ENCODE measurements at regions of chr1 and their contacts with region 1.

Region 1: GRCh38 chr1:76154206-76154956 is 79.8 kb downstream of the ST6GALNAC3 start:
- DNase-seq: peak; percentile 67 to 82 (median 69)
- ATAC-seq: peak; percentile 82 to 93 (median 92)
- H3K4me3 ChIP-seq: peak overlapping the region in 10 of 12 donors; percentile 10 to 54 (median 42)
- H3K27ac ChIP-seq: peak overlapping the region in 11 of 12 donors; percentile 0 to 56 (median 38)
- H3K4me1 ChIP-seq: peaks cover 0 to 15% (median 4%) of the 10 kb centered on the region in 12 donors
- H3K27me3 ChIP-seq: peaks cover 0 to 3% (median 0%) of the 10 kb centered on the region in 9 donors
- CTCF ChIP-seq: peak; percentile 89 to 98 (median 94)
- POLR2A ChIP-seq: no peak

Region 2: GRCh38 chr1:76035053-76035452 is 119.3 kb before region 1 on chr1:
- intact Hi-C with region 1: loop called in 3 of 10 experiments (anchors 5 to 10 kb)
- DNase-seq: no peak
- ATAC-seq: no peak
- H3K4me3 ChIP-seq: no peak overlapping the region
- H3K27ac ChIP-seq: no peak overlapping the region
- H3K4me1 ChIP-seq: no peaks in the 10 kb centered on the region
- H3K27me3 ChIP-seq: no peaks in the 10 kb centered on the region
- CTCF ChIP-seq: peak in 10 of 12 donors; percentile 8 to 49 (median 36)
- POLR2A ChIP-seq: no peak

Region 3: GRCh38 chr1:76083189-76083588 is 71.2 kb before region 1 on chr1:
- intact Hi-C with region 1: loop called in 1 of 10 experiments (anchors 5 kb)
- DNase-seq: no peak
- ATAC-seq: peak in 1 of 4 donors; percentile 45
- H3K4me3 ChIP-seq: no peak overlapping the region
- H3K27ac ChIP-seq: no peak overlapping the region
- H3K4me1 ChIP-seq: no peaks in the 10 kb centered on the region
- H3K27me3 ChIP-seq: no peaks in the 10 kb centered on the region
- CTCF ChIP-seq: no peak
- POLR2A ChIP-seq: no peak

Region 4: DNA sequence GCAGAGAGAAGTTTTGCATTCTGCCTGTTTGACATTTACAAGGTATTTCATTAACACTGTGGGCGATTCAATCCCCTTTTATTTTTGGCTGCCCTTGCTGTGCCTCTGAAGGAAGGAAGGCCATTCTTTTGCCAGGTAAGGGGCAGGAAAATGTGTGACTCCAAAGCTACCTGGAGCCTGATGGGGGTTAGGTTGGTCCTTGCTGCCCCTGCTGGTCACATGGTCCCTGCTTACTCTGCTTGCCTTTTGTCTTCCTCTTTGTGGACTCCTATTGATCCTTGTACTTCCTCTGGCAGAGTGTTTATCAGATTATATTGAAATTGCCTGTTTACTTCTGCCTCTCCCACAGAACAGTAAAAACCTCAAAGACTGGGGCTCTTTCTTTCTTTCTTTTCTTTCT is 14.2 kb before region 1 on chr1:
- intact Hi-C with region 1: no loop called
- DNase-seq: no peak
- ATAC-seq: no peak
- H3K4me3 ChIP-seq: no peak overlapping the region
- H3K27ac ChIP-seq: peak overlapping the region; percentile 15 to 87 (median 76)
- H3K4me1 ChIP-seq: peaks cover 0 to 59% (median 12%) of the 10 kb centered on the region in 12 donors
- H3K27me3 ChIP-seq: no peaks in the 10 kb centered on the region
- CTCF ChIP-seq: no peak
- POLR2A ChIP-seq: no peak

Region 5: DNA sequence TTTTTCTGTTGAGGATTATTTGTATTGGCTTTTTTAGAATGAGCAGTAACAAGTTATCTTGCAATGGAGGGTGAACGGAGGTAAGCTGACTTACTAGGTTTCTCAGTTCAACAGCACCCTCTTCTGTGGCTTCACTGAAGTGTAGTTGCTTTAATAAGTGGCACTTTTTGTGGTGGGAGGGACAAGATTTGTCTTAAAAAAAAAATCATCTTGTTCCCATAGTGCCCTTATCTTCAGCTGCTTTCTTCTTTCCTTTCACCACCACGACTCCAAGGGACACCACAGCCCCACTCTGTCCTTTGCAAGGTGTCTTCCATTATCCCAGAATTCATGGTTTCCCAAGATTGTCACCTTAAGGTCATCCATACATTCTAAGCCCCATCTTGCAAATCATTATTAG is 971.9 kb after region 1 on chr1:
- intact Hi-C with region 1: loop called in 8 of 10 experiments (anchors 5 to 10 kb)
- DNase-seq: no peak
- ATAC-seq: peak in 3 of 4 donors; percentile 61 to 66 (median 65)
- H3K4me3 ChIP-seq: no peak overlapping the region
- H3K27ac ChIP-seq: no peak overlapping the region
- H3K4me1 ChIP-seq: no peaks in the 10 kb centered on the region
- H3K27me3 ChIP-seq: no peaks in the 10 kb centered on the region
- CTCF ChIP-seq: peak in 11 of 12 donors; percentile 19 to 57 (median 40)
- POLR2A ChIP-seq: no peak

Region 6: DNA sequence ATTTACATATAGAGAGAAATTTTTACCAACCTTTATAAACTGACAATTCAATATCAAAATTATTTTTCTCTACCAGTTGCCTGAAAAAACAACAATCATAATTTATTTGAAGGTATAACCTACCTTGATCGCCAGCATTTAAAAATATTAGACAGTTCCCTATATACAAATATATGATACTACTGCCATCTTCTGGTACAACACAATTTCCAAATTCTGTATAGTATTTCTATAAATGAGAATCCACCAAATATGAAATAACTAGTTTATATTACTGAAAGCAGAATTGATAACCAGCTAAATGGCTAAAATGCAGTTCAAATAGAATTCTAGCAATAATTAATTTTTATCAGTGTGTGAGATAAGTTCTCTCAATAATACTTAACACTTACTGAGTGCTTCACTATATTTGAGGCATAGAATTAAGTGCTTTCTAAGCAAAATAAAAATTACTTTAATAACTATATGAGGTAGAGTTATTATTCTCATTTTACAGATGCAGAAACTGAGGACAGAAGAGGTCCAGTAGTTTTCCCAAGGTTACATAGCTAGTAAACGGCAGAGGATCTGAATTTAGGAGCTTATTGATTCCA is 989.2 kb after region 1 on chr1:
- intact Hi-C with region 1: loop called in 4 of 10 experiments (anchors 5 to 10 kb)
- DNase-seq: no peak
- ATAC-seq: no peak
- H3K4me3 ChIP-seq: no peak overlapping the region
- H3K27ac ChIP-seq: no peak overlapping the region
- H3K4me1 ChIP-seq: no peaks in the 10 kb centered on the region
- H3K27me3 ChIP-seq: no peaks in the 10 kb centered on the region
- CTCF ChIP-seq: peak in 9 of 12 donors; percentile 14 to 46 (median 31)
- POLR2A ChIP-seq: no peak

Measured in heart left ventricle (tissue), 16 donors.